Uterus (tissue), 4 donors: ENCODE measurements at regions of chr13 and their contacts with region 1.

Region 1: GRCh38 chr13:35978603-35979316 is 152.4 kb downstream of the DCLK1 start:
- DNase-seq: peak; percentile 31 to 60
- H3K4me3 ChIP-seq: no peak overlapping the region
- H3K27ac ChIP-seq: peak overlapping the region; percentile 77 to 80
- H3K4me1 ChIP-seq: peaks cover 0 to 4% of the 10 kb centered on the region in 2 donors
- H3K27me3 ChIP-seq: no peaks in the 10 kb centered on the region
- CTCF ChIP-seq: peak; percentile 80 to 90 (median 82)
- POLR2A ChIP-seq: no peak

Region 2: DNA sequence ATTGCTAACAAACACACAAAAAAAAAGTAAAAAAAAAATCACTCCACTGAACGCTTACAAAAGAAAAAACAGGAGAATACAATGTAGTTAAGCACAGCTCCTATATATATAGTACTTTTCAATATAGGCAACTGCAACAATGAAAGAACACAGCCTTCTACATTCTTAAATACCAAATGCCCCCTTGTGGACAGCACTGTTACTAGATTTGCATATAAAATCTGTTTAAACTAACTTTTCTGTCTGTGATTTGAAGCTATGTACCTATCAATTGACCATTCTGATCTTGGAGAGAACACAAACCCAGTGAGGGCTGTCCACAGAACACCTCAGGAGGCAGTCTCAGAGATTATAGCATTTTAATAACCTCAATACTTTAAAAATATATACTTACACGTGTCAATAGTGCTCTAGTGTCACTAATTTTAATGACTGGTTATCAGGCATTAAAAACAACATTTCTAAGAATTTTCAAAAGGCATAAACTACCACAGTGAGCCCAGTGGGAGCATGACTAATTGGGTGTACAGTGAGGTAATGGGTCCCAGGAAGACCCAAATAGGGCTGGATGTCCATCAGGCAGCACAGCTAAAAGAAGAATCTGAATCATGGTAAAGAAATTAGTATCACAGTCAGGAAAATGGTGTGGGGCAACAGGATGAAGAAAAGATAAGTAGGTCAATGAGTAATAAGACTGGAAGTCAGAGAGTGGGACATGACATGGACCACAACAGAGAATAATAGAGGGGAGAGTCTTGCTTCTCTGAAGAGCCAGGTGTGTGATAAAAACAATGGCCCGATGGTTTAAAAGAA is 296.6 kb after region 1 on chr13:
- intact Hi-C with region 1: loop called (anchors 5 kb)
- DNase-seq: peak in 1 of 2 donors; percentile 58
- H3K4me3 ChIP-seq: no peak overlapping the region
- H3K27ac ChIP-seq: no peak overlapping the region
- H3K4me1 ChIP-seq: no peaks in the 10 kb centered on the region
- H3K27me3 ChIP-seq: no peaks in the 10 kb centered on the region
- CTCF ChIP-seq: peak; percentile 55 to 65 (median 60)
- POLR2A ChIP-seq: no peak